Right ventricle myocardium superior (tissue), 1 donor: ENCODE measurements at regions of chr9 and their contacts with region 1.

Region 1: GRCh38 chr9:88388172-88388885 is at the start of gene SPIN1:
- DNase-seq: peak; percentile 89
- ATAC-seq: peak; percentile 86
- total RNA-seq, gene SPIN1: 44.9 TPM

Region 2: DNA sequence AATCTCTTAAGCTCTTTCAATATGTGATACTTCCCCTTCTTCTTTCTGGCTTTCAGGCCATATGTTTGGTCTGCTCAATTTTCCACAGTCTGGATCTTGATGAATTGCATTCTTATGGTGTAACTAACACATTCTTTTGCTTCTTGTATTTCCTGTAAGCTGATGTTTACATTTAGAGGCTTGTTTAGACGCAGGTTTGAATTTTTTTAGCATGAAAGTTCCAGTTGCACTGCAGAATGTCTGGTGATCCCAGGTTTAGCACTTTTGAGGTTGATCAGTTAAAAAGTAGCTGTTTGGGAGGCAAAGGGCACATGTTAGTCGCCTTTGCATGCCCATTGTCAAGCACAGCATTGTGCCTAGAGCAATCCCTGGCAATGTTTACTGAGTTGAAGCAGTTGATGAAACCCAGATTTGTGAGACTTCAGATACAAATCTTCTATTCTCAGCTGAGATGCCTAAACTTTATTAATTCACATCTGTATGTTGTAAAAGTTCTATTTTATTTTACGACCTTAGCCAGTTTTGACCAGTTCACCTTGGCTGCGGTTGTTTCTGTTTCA is 190.5 kb before region 1 on chr9:
- intact Hi-C with region 1: loop called (anchors 10 kb)
- DNase-seq: no peak
- ATAC-seq: no peak

Region 3: GRCh38 chr9:88230612-88231011 is 157.7 kb before region 1 on chr9:
- intact Hi-C with region 1: no loop called
- DNase-seq: no peak
- ATAC-seq: no peak

Region 4: GRCh38 chr9:88370292-88370691 is 18.0 kb before region 1 on chr9:
- intact Hi-C with region 1: no loop called
- DNase-seq: no peak
- ATAC-seq: no peak